ENCODE measurements at regions of chr1 and their contacts with region 1.

Region 1: DNA sequence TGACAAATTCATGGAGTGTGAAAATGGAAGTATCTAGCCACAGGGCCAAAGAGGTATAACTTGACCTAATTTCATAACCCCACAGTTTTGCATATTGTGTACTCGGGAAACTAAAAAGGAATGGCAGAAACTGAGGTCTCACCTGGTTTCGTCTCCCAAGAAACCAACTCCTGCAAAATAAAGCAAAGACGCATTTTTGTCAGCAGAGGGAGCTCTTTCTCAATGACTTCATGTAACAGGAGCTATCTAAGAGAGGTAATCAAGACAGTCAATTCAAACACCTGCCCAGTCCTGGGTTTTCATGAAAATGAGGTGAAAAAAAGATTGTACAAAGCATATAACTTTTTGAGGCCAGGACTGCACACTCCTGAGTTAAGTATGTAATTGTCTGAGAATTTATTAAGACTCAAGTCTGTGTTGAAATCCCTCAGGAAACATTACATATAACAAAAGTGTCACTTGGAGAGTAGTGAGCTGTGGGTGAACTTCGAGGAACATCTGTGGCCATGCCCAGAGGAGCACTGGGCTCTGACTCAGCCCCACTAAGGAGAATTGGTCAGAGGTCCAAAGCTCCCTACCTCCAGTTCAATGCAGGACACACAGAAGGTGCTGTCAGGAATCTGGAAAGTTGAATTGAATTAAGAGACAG is 17.6 kb downstream of the FCRL4 start:
- DNase-seq: peak; percentile 70
- H3K4me3 ChIP-seq: no peak overlapping the region
- H3K27ac ChIP-seq: no peak overlapping the region
- H3K4me1 ChIP-seq: no peaks in the 10 kb centered on the region
- H3K27me3 ChIP-seq: peaks cover 0 to 2% of the 10 kb centered on the region in 2 experiments
- CTCF ChIP-seq: peak; percentile 59 to 63
- POLR2A ChIP-seq: no peak

Region 2: GRCh38 chr1:157562515-157562914 is 17.8 kb before region 1 on chr1:
- CTCF ChIA-PET with region 1: interaction called, 47 read pairs
- POLR2A ChIA-PET with region 1: no interaction called
- dilution Hi-C with region 1: no loop called
- intact Hi-C with region 1: no loop called
- DNase-seq: no peak
- H3K4me3 ChIP-seq: no peak overlapping the region
- H3K27ac ChIP-seq: no peak overlapping the region
- H3K4me1 ChIP-seq: no peaks in the 10 kb centered on the region
- H3K27me3 ChIP-seq: peaks cover 0 to 2% of the 10 kb centered on the region in 2 experiments
- CTCF ChIP-seq: no peak
- POLR2A ChIP-seq: no peak

Region 3: GRCh38 chr1:157595356-157595755 is 15.1 kb after region 1 on chr1:
- CTCF ChIA-PET with region 1: interaction called, 20 read pairs
- POLR2A ChIA-PET with region 1: no interaction called
- dilution Hi-C with region 1: no loop called
- intact Hi-C with region 1: no loop called
- DNase-seq: no peak
- H3K4me3 ChIP-seq: no peak overlapping the region
- H3K27ac ChIP-seq: no peak overlapping the region
- H3K4me1 ChIP-seq: no peaks in the 10 kb centered on the region
- H3K27me3 ChIP-seq: no peaks in the 10 kb centered on the region
- CTCF ChIP-seq: no peak
- POLR2A ChIP-seq: no peak

Region 4: GRCh38 chr1:157691285-157691920 is 111.1 kb after region 1 on chr1:
- CTCF ChIA-PET with region 1: interaction called, 49 read pairs
- POLR2A ChIA-PET with region 1: no interaction called
- dilution Hi-C with region 1: no loop called
- intact Hi-C with region 1: loop called (anchors 1 kb)
- DNase-seq: peak; percentile 28
- H3K4me3 ChIP-seq: no peak overlapping the region
- H3K27ac ChIP-seq: no peak overlapping the region
- H3K4me1 ChIP-seq: no peaks in the 10 kb centered on the region
- H3K27me3 ChIP-seq: no peaks in the 10 kb centered on the region
- CTCF ChIP-seq: peak in 1 of 2 donors; percentile 47
- POLR2A ChIP-seq: no peak

Region 5: GRCh38 chr1:157782931-157783330 is 202.6 kb after region 1 on chr1:
- CTCF ChIA-PET with region 1: no interaction called
- POLR2A ChIA-PET with region 1: no interaction called
- dilution Hi-C with region 1: no loop called
- intact Hi-C with region 1: no loop called
- DNase-seq: no peak
- H3K4me3 ChIP-seq: no peak overlapping the region
- H3K27ac ChIP-seq: no peak overlapping the region
- H3K4me1 ChIP-seq: no peaks in the 10 kb centered on the region
- H3K27me3 ChIP-seq: no peaks in the 10 kb centered on the region
- CTCF ChIP-seq: no peak
- POLR2A ChIP-seq: no peak

Region 6: DNA sequence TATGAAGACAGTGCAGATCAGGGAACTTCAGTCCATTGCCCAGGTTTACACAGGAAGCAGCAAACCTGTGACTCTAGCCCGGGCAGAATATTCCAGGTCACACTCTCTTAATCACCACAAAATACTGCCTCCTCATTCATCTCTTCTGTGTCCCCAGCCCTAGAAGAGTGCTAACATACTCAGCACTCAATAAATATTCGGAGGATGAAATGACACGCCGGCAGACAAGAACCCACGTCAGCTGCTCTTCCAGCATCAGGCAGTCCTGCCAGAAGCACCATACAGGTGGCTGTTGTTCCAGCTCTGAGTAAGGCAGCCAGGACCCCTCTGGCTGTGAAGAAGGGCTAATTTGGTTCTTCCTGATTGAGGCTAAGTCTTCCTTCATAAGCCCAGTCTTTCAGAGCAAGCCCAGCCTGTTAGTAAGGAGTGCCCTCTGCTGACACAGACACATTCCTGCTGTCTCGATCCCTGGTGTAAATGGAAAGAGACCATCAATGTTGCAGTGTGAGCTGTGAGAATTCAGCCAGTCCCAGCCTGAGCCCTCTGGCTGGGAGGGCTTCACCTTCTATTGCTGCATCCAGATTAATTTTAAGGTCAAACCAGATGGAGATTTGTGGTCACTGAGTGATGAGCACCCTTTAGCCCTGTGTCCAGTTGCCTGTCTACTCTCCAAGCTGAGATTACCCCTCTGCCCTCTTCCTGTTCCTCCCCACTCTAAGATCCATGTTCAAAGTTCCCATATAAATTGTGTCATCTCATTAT is 368.2 kb after region 1 on chr1:
- CTCF ChIA-PET with region 1: interaction called, 46 read pairs
- POLR2A ChIA-PET with region 1: no interaction called
- dilution Hi-C with region 1: no loop called
- intact Hi-C with region 1: loop called (anchors 1 kb)
- DNase-seq: no peak
- H3K4me3 ChIP-seq: no peak overlapping the region
- H3K27ac ChIP-seq: no peak overlapping the region
- H3K4me1 ChIP-seq: no peaks in the 10 kb centered on the region
- H3K27me3 ChIP-seq: peaks cover 14 to 17% of the 10 kb centered on the region in 2 experiments
- CTCF ChIP-seq: peak in 1 of 2 donors; percentile 14
- POLR2A ChIP-seq: no peak

Measured in endothelial cell of umbilical vein (primary cell).